Dendritic cell treated with granulocyte-macrophage colony-stimulating factor and Interleukin-4, amounts not matched to agents 40 ng/mL and 50 ng/mL, for 4 days (primary cell): ENCODE measurements at regions of chr2 and their contacts with region 1.

Region 1: GRCh38 chr2:218360447-218360846 is 3.8 kb downstream of the CATIP start:
- H3K4me3 Mint-ChIP-seq: peak overlapping the region; percentile 49
- H3K27ac Mint-ChIP-seq: peak overlapping the region; percentile 78
- H3K4me1 Mint-ChIP-seq: peaks cover 74% of the 10 kb centered on the region
- H3K27me3 Mint-ChIP-seq: no peaks in the 10 kb centered on the region

Region 2: DNA sequence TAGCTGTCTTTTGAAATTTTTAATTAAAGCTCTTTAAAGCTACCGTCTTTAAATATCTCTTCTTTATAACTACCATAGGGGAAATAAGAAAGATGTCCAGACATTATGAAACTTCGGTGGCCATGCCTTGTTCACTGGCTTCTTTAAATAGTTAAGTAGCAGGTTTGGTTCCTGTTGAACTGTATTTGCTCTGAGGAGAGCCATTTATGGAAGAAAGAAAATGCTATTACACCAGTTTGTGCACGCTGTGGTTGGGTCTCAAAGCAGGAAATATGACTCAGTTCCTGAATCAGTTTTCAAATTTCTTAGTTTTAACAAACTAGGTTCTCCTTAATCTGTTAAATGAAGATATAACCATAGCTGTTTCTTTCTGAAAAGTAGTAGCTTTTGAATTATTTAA is 131.2 kb before region 1 on chr2:
- intact Hi-C with region 1: no loop called
- H3K4me3 Mint-ChIP-seq: peak overlapping the region; percentile 40
- H3K27ac Mint-ChIP-seq: peak overlapping the region; percentile 48
- H3K4me1 Mint-ChIP-seq: peaks cover 73% of the 10 kb centered on the region
- H3K27me3 Mint-ChIP-seq: no peaks in the 10 kb centered on the region

Region 3: DNA sequence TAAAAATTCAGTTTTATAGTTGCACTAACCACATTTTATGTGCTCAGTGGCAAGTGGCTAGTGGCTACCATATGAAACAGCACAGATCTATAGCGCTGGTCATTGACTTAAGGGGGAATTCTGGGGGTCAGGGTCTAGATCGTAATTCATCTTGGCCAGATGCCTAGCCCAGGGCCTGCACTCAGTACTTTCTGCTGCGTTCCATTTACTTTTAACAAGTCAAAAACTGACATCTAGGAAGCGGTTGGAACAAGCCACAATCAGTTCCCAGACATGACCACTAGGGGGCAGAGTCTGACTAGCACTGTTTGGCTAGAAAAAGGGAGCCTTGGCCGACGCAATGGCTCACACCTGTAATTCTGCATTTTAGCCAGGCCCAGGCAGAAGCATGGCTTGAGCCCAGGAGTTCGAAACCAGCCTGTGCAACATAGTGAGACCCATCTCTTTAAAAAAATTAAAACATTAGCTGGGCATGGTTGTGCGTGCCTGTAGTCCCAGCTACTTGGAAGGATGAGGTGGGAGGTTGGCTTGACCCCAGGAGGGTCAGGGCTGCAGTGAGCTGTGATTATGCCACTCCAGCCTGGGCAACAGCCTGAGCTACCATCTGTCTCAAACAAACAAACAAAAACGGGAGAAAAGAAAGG is 59.1 kb before region 1 on chr2:
- intact Hi-C with region 1: loop called (anchors 1 kb)
- H3K4me3 Mint-ChIP-seq: no peak overlapping the region
- H3K27ac Mint-ChIP-seq: no peak overlapping the region
- H3K4me1 Mint-ChIP-seq: peaks cover 7% of the 10 kb centered on the region
- H3K27me3 Mint-ChIP-seq: peaks cover 1% of the 10 kb centered on the region

Region 4: GRCh38 chr2:218322895-218323808 is 37.3 kb before region 1 on chr2:
- intact Hi-C with region 1: loop called (anchors 5 kb)
- H3K4me3 Mint-ChIP-seq: peak overlapping the region; percentile 97
- H3K27ac Mint-ChIP-seq: peak overlapping the region; percentile 93
- H3K4me1 Mint-ChIP-seq: peaks cover 74% of the 10 kb centered on the region
- H3K27me3 Mint-ChIP-seq: no peaks in the 10 kb centered on the region